WTC11 (cell line): ENCODE measurements at regions of chrX and their contacts with region 1.

Region 1: GRCh38 chrX:14029425-14030173 is at the start of gene GEMIN8:
- DNase-seq: peak; percentile 74
- ATAC-seq: peak; percentile 83
- H3K4me3 Mint-ChIP-seq: peak within 1 kb of the TSS; percentile 91
- H3K27ac Mint-ChIP-seq: peak within 1 kb of the TSS; percentile 98
- H3K4me1 Mint-ChIP-seq: peaks cover 33% of the 10 kb centered on the region
- H3K27me3 Mint-ChIP-seq: no peaks in the 10 kb centered on the region
- CTCF ChIP-seq: no peak
- total RNA-seq, gene GEMIN8: 20.6 to 22.0 TPM (median 21.1 TPM) in 3 replicates

Region 2: DNA sequence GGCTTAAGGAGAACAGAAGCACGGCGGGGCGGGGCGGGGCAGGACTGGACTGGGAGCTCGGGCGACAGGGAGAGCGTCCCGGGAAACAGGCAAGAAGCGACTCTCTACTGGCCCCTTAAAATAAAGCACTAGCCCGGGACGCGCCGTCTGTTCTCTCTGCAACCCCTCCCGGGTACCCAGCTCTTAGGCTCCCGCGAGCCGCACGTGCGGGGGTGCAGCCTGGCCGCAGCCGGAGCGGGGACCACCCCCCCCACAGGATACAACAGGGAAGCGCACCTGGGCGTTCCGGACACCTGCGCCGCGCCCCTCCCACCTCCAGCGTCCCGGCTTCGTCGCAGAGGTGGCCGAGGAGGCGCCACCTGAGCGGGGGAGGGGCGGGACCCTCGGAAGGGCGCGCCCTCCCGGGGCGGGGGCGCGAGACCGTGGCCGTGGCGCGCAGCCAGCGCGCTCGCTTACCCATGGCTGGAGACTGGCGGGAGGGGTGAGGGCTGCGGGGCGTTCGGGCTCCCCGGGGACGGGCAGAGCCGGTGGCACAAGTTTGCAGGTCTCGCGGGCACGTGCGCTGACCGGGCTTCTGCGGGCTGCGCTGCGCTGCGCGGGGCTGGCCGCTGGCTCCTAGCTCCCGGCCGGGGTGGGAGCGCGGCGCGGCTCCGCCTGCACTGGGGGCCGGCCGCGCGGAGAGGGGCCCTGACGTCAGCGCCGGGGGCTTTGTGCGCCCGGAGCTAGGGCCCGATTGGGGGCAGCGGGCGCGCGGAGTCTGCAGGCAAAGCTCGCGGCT is 91.4 kb before region 1 on chrX:
- CTCF ChIA-PET with region 1: interaction called, 3 read pairs
- POLR2A ChIA-PET with region 1: interaction called, 23 read pairs
- DNase-seq: peak; percentile 75
- ATAC-seq: peak; percentile 67
- H3K4me3 Mint-ChIP-seq: peak overlapping the region; percentile 82
- H3K27ac Mint-ChIP-seq: peak overlapping the region; percentile 97
- H3K4me1 Mint-ChIP-seq: peaks cover 57% of the 10 kb centered on the region
- H3K27me3 Mint-ChIP-seq: no peaks in the 10 kb centered on the region
- CTCF ChIP-seq: no peak

Region 3: GRCh38 chrX:14084466-14084865 is 54.9 kb after region 1 on chrX:
- CTCF ChIA-PET with region 1: no interaction called
- POLR2A ChIA-PET with region 1: no interaction called
- DNase-seq: no peak
- ATAC-seq: no peak
- H3K4me3 Mint-ChIP-seq: no peak overlapping the region
- H3K27ac Mint-ChIP-seq: no peak overlapping the region
- H3K4me1 Mint-ChIP-seq: no peaks in the 10 kb centered on the region
- H3K27me3 Mint-ChIP-seq: no peaks in the 10 kb centered on the region
- CTCF ChIP-seq: no peak